ENCODE measurements at regions of chr7 and their contacts with region 1.

Region 1: DNA sequence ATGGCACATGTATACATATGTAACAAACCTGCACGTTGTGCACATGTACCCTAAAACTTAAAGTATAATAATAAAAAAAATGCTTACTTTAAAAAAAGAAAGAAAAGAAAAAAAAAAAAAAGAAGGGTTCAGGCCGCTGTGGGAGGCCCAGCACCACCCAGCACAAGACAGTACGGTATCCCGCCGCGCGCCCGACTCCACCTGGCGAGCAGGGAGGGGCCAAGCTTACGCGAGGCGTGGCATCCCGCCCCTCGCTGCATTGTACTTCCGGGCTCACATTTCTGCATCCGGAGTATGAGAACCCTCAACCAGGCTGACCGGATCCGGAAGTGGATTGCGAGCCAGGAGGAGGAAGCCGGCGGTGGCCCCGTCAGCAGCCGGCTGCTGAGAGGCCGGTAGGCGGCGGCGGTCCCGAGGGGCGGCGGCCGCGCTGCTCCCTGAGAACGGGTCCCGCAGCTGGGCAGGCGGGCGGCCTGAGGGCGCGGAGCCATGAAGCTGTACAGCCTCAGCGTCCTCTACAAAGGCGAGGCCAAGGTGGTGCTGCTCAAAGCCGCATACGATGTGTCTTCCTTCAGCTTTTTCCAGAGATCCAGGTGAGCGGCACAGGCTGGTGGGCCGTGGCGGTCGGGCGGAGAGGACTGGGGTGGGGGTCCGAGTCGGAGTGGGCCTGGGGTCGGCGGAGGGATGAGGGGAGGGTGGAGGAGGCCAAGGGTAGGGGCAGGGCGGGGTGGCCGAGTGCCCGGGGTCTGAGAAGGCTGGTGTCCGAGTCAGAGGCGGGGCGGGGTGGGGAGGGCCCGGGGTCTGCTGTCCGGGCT is at the start of gene YKT6:
- DNase-seq: peak; percentile 91 to 99 (median 94)

Region 2: DNA sequence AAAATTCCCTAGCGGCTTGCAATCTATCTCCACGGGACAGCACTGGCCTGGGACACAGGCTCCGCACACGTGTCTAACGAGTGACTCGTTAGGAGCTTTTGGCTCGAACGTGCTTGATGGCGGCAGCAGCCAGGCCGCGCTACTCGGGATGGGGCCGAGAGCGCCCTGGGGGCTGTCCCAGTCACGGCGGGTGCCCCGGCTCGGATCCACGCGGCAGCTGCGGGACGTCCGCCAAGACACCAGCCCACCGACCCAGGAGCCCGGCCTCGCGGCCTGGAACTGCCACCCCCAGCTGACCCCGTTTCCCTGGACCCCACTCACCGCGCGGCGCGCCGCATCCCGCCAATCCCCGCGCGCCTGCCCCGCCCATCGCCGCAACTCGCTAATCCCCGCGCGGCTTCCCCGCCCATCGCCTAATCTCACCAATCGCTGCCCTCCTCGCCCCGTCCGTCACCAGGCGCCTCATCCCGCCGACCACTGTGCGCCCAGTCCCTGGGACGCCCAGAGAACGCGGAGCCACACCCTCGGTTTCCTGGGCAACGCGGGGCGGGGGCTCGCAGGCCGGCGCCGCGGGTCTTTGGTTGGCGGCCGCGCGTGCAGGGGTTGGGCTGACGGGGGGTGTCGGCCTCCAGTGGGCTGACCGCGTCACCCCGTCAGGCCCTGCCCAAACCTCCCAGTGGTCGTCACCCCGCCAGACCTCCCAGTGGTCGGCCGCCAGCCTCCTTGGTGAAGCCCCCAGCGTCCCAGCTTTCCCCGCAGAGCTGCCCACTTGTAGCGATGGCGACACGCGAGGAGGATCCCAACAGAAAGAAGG is 77.5 kb before region 1 on chr7 and contains the start of gene POLD2:
- intact Hi-C with region 1: loop called (anchors 10 kb)
- DNase-seq: peak; percentile 97 to 100 (median 98)

Measured in posterior cingulate gyrus (tissue), 11 donors.